Activated naive CD4-positive, alpha-beta T cell treated with anti-CD3 and anti-CD28 coated beads for 36 hours (primary cell): ENCODE measurements at regions of chr1 and their contacts with region 1.

Region 1: DNA sequence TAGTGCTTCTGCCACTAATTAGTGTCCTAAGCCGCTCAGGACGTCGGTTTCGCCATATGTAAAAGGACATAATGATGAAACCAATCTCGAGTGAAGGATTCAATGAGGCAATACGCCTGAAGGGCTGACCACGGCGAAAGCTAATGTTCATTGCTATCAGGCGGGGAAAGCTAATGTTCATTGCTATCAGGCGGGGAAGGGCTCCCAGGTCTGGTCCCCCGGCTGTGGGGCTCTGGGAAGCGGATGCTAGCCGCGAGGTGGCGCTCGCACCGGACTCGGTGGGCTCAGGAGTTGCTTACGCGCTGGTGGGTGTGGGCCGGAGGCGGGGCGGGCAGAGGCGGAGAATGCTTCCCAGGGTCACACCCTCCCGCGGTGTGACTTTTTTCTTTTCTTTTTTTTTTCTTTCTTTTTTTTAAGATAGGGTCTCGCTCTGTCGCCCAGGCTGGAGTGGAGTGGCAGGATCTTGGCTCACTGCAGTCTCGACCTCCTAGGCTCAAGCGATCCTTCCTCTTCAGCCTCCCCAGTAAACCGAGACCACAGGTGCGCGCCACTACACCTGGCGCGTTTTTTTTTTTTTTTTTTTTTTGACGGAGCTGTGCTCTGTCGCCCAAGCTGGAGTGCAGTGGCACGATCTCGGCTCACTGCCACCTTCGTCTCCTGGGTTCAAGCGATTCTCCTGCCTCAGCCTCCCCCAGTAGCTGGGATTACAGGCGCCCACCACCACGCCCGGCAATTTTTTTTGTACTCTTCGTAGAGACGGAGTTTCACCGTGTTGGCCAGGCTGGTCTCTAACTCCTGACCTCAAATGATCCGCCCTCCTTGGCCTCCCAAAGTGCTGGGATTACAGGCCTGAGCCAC is 1.1 kb upstream of the PEAR1 start:
- DNase-seq: peak; percentile 92
- H3K4me3 Mint-ChIP-seq: peak overlapping the region; percentile 41
- H3K27ac Mint-ChIP-seq: no peak overlapping the region
- H3K4me1 Mint-ChIP-seq: peaks cover 11% of the 10 kb centered on the region
- H3K27me3 Mint-ChIP-seq: peaks cover 47% of the 10 kb centered on the region

Region 2: GRCh38 chr1:156689035-156689952 is 203.1 kb before region 1 on chr1:
- CTCF ChIA-PET with region 1: interaction called, 29 read pairs
- intact Hi-C with region 1: loop called (anchors 1 kb)
- DNase-seq: peak; percentile 80
- H3K4me3 Mint-ChIP-seq: no peak overlapping the region
- H3K27ac Mint-ChIP-seq: no peak overlapping the region
- H3K4me1 Mint-ChIP-seq: peaks cover 28% of the 10 kb centered on the region
- H3K27me3 Mint-ChIP-seq: peaks cover 46% of the 10 kb centered on the region

Region 3: DNA sequence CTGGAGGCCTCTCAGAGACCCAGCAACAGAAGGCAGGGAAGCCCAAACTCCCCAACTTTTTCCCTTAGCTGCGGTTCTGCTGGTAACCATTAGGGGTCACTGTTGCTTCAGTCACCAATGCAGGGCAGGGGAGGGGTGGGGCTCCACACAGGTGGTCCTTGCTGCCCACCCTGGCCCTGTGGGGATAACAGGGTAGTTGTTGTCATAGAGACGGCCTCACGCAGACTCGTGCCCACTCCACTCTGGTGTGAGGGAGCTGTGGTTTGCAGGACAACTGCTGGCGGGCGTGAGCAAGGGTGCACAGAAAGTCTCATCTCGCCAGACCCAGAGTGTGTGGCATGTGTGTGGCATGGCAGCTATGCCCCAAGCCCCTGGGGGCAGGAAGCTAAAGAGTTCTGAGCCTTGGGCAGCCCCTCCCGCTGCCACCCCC is 53.4 kb before region 1 on chr1:
- CTCF ChIA-PET with region 1: interaction called, 82 read pairs
- intact Hi-C with region 1: loop called (anchors 1 kb)
- DNase-seq: peak; percentile 58
- H3K4me3 Mint-ChIP-seq: no peak overlapping the region
- H3K27ac Mint-ChIP-seq: no peak overlapping the region
- H3K4me1 Mint-ChIP-seq: peaks cover 26% of the 10 kb centered on the region
- H3K27me3 Mint-ChIP-seq: peaks cover 34% of the 10 kb centered on the region

Region 4: GRCh38 chr1:156920233-156921052 is 28.0 kb after region 1 on chr1 and contains the start of gene LRRC71:
- CTCF ChIA-PET with region 1: interaction called, 79 read pairs
- intact Hi-C with region 1: loop called (anchors 1 kb)
- DNase-seq: peak; percentile 70
- H3K4me3 Mint-ChIP-seq: no peak within 1 kb of the TSS
- H3K27ac Mint-ChIP-seq: no peak within 1 kb of the TSS
- H3K4me1 Mint-ChIP-seq: peaks cover 6% of the 10 kb centered on the region
- H3K27me3 Mint-ChIP-seq: peaks cover 70% of the 10 kb centered on the region
- total RNA-seq, gene LRRC71: not detected

Region 5: DNA sequence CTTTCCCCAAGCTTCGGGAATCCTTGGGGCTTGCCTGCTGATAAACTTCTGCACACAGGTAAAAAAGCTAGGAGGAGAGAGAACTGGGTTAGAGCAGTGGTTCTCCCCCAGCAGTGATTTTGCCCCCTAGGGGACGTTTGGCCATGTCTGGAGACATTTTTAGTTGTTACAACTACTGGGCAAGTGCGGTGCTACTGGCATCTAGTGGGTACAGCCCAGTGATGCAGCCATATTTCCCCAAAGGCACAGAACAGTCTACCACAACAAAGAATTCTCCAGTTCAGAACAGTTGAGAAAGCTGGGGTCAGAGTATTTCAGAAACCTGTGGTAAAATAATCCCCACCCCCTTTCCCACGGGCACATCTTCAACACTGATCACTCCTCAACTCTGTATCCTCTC is 69.3 kb after region 1 on chr1:
- CTCF ChIA-PET with region 1: interaction called, 14 read pairs
- intact Hi-C with region 1: loop called (anchors 1 kb)
- DNase-seq: peak; percentile 63
- H3K4me3 Mint-ChIP-seq: no peak overlapping the region
- H3K27ac Mint-ChIP-seq: no peak overlapping the region
- H3K4me1 Mint-ChIP-seq: peaks cover 27% of the 10 kb centered on the region
- H3K27me3 Mint-ChIP-seq: no peaks in the 10 kb centered on the region

Region 6: GRCh38 chr1:157156058-157156541 is 263.7 kb after region 1 on chr1:
- CTCF ChIA-PET with region 1: no interaction called
- intact Hi-C with region 1: loop called (anchors 1 kb)
- DNase-seq: peak; percentile 81
- H3K4me3 Mint-ChIP-seq: no peak overlapping the region
- H3K27ac Mint-ChIP-seq: no peak overlapping the region
- H3K4me1 Mint-ChIP-seq: peaks cover 14% of the 10 kb centered on the region
- H3K27me3 Mint-ChIP-seq: no peaks in the 10 kb centered on the region